ENCODE measurements at regions of chr16 and their contacts with region 1.

Region 1: DNA sequence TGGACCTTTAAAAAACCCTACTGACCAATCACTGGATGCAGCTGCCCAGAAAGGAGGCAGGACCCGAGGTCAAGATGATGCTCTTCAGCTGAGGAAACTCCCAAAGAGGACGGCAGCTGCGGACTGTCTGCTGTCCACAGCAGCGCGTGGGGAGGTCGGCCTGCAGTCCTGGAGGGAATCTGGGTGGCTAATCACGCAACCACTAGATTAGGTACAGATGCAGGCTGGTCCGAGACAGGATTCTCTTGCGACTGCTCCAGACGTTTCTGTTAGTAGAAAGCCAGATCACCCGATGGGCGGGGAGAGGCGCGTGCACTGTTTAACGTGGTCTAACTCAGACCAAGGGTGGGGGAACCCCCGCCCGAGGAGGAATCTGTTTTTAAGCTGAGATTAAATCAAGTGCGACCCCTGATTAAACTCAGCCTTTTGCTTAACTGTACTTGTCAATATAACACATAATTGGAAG is 8.8 kb downstream of the CTRB2 start:
- DNase-seq: no peak
- ATAC-seq: no peak
- H3K4me3 ChIP-seq: no peak overlapping the region
- H3K27ac ChIP-seq: no peak overlapping the region
- H3K4me1 ChIP-seq: peaks cover 3% of the 10 kb centered on the region; the same call in 1 of the 2 replicates
- H3K27me3 ChIP-seq: peaks cover 1 to 4% of the 10 kb centered on the region in 2 experiments
- CTCF ChIP-seq: no peak
- EP300 ChIP-seq: no peak
- POLR2A ChIP-seq: no peak
- RAD21 ChIP-seq: no peak

Region 2: GRCh38 chr16:74813109-74813641 is 385.0 kb before region 1 on chr16:
- CTCF ChIA-PET with region 1: no interaction called
- POLR2A ChIA-PET with region 1: no interaction called
- RAD21 ChIA-PET with region 1: no interaction called
- SMC1A ChIA-PET with region 1: no interaction called
- in situ Hi-C with region 1: no loop called
- intact Hi-C with region 1: loop called (anchors 5 kb)
- DNase-seq: peak; percentile 11
- ATAC-seq: peak; percentile 100
- H3K4me3 ChIP-seq: no peak overlapping the region; the same call in 1 of the 2 replicates
- H3K27ac ChIP-seq: no peak overlapping the region
- H3K4me1 ChIP-seq: no peaks in the 10 kb centered on the region
- H3K27me3 ChIP-seq: no peaks in the 10 kb centered on the region; a peak in 1 of 4 replicates
- CTCF ChIP-seq: peak; percentile 96 to 99 (median 98); a peak in 5 of 6 replicates
- EP300 ChIP-seq: no peak
- POLR2A ChIP-seq: no peak
- RAD21 ChIP-seq: peak; percentile 80

Region 3: GRCh38 chr16:75011634-75012307 is 186.4 kb before region 1 on chr16:
- CTCF ChIA-PET with region 1: no interaction called
- POLR2A ChIA-PET with region 1: no interaction called
- RAD21 ChIA-PET with region 1: no interaction called
- SMC1A ChIA-PET with region 1: no interaction called
- in situ Hi-C with region 1: no loop called
- intact Hi-C with region 1: no loop called
- DNase-seq: peak; percentile 92
- ATAC-seq: peak; percentile 91
- H3K4me3 ChIP-seq: peak overlapping the region; percentile 60
- H3K27ac ChIP-seq: peak overlapping the region; percentile 96
- H3K4me1 ChIP-seq: peaks cover 47% of the 10 kb centered on the region
- H3K27me3 ChIP-seq: no peaks in the 10 kb centered on the region
- CTCF ChIP-seq: no peak
- EP300 ChIP-seq: peak; percentile 89
- POLR2A ChIP-seq: peak; percentile 64
- RAD21 ChIP-seq: no peak

Region 4: DNA sequence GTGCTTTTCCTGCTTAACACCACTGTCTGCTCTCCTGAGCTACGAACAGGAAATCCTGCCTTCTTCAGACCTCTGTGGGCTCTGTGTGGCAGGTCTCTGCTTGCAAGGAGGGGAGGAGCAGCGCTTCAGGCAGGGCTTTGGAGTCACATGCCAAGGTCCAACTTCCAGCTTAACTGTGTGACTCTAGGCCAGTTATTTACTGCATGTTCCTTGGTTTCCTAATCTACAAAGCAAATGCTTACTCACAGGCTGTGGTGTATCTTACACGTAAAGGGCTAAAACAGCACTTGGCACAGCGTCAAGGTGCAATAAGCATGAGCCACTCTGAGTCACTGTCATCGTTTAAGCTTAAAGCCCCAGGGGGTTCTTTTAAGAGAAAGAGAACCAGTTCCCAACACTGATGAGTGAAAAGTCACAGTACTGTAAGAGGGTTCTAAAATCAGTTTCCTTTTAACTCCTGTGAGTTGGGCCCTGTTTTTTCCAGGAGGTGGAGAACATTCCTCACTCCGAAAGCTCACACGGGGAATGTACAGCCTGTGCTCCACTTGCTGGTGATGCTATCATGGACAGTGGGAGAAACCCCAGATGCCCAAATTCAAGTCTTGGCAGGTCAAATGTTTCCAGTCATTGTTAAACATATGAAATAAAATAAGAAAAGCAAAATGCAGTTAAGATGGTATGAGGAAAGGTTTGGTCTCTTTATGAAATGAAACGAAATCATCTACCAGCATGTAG is 107.4 kb after region 1 on chr16:
- CTCF ChIA-PET with region 1: interaction called, 7 read pairs
- POLR2A ChIA-PET with region 1: no interaction called
- RAD21 ChIA-PET with region 1: interaction called, 11 read pairs
- SMC1A ChIA-PET with region 1: no interaction called
- in situ Hi-C with region 1: no loop called
- intact Hi-C with region 1: no loop called
- DNase-seq: peak; percentile 71
- ATAC-seq: peak; percentile 95
- H3K4me3 ChIP-seq: no peak overlapping the region
- H3K27ac ChIP-seq: peak overlapping the region; percentile 55
- H3K4me1 ChIP-seq: peaks cover 12% of the 10 kb centered on the region
- H3K27me3 ChIP-seq: no peaks in the 10 kb centered on the region
- CTCF ChIP-seq: no peak
- EP300 ChIP-seq: peak in 1 of 2 experiments; percentile 13; a peak in 1 of 4 replicates
- POLR2A ChIP-seq: no peak
- RAD21 ChIP-seq: no peak

Region 5: GRCh38 chr16:75379911-75380847 is 182.0 kb after region 1 on chr16:
- CTCF ChIA-PET with region 1: interaction called, 170 read pairs
- POLR2A ChIA-PET with region 1: interaction called, 6 read pairs
- RAD21 ChIA-PET with region 1: interaction called, 65 read pairs
- SMC1A ChIA-PET with region 1: interaction called, 52 read pairs
- in situ Hi-C with region 1: loop called (anchors 5 kb)
- intact Hi-C with region 1: loop called (anchors 1 kb)
- DNase-seq: peak; percentile 60
- ATAC-seq: peak; percentile 97
- H3K4me3 ChIP-seq: no peak overlapping the region
- H3K27ac ChIP-seq: peak overlapping the region; percentile 69
- H3K4me1 ChIP-seq: peaks cover 38% of the 10 kb centered on the region
- H3K27me3 ChIP-seq: no peaks in the 10 kb centered on the region
- CTCF ChIP-seq: no peak
- EP300 ChIP-seq: peak; percentile 76 to 83
- POLR2A ChIP-seq: no peak
- RAD21 ChIP-seq: peak; percentile 4; the same call in 1 of the 2 replicates

Region 6: GRCh38 chr16:75402821-75403475 is 204.8 kb after region 1 on chr16:
- CTCF ChIA-PET with region 1: interaction called, 85 read pairs
- POLR2A ChIA-PET with region 1: interaction called, 6 read pairs
- RAD21 ChIA-PET with region 1: interaction called, 44 read pairs
- SMC1A ChIA-PET with region 1: interaction called, 28 read pairs
- in situ Hi-C with region 1: no loop called
- intact Hi-C with region 1: loop called (anchors 1 kb)
- DNase-seq: no peak
- ATAC-seq: peak; percentile 59; the same call in 2 of the 3 replicates
- H3K4me3 ChIP-seq: no peak overlapping the region
- H3K27ac ChIP-seq: no peak overlapping the region
- H3K4me1 ChIP-seq: no peaks in the 10 kb centered on the region
- H3K27me3 ChIP-seq: no peaks in the 10 kb centered on the region
- CTCF ChIP-seq: peak; percentile 45 to 60 (median 55); a peak in 5 of 6 replicates
- EP300 ChIP-seq: no peak
- POLR2A ChIP-seq: no peak
- RAD21 ChIP-seq: peak; percentile 59

Region 7: DNA sequence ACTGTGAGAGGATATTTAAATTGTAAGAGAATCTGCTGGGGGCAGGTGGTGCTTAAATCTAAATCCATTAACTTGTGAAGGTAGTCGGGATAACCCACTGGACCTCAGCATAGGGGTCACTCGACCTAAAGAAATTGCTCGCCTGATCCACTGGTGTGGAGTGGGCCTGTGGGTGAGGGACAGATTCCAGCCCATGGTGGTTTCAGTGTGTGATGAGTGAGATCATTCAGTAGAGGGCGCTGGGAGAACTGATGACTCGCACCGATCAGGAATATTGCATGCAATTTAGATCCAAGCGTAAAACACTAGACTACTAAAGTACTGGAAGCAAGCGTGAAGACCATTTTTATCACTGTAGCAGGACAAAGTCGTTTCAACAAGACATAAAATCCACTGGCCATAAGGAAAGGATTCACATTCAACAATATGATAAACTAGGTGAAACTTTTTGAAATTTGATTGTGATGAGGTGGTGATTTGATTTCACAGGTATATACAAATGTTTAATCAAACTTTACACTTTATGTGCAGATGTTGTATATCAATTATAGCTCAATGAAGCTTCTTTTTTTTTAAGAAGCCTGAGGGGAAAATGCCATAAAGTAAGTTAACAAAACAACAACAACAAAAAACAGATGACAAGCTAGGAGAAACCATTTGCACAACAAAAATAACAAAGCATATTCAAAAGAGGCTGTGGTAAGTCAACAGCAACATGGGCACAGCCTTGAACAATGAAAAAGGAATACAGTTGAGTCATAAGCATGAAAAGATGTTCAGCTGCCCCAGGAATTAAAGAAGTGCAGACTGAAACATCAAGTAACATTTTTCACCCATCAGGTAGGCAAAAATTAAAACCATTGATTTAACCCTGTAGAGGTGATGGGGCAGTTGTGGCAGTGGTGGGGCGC is 273.8 kb after region 1 on chr16:
- CTCF ChIA-PET with region 1: interaction called, 11 read pairs
- POLR2A ChIA-PET with region 1: no interaction called
- RAD21 ChIA-PET with region 1: interaction called, 6 read pairs
- SMC1A ChIA-PET with region 1: interaction called, 4 read pairs
- in situ Hi-C with region 1: no loop called
- intact Hi-C with region 1: no loop called
- DNase-seq: no peak
- ATAC-seq: peak; percentile 94
- H3K4me3 ChIP-seq: no peak overlapping the region
- H3K27ac ChIP-seq: no peak overlapping the region
- H3K4me1 ChIP-seq: no peaks in the 10 kb centered on the region
- H3K27me3 ChIP-seq: no peaks in the 10 kb centered on the region
- CTCF ChIP-seq: peak; percentile 74 to 85 (median 80)
- EP300 ChIP-seq: no peak
- POLR2A ChIP-seq: no peak
- RAD21 ChIP-seq: peak; percentile 86

Region 8: GRCh38 chr16:75495076-75495674 is 297.0 kb after region 1 on chr16 and contains the start of gene CHST6:
- CTCF ChIA-PET with region 1: no interaction called
- POLR2A ChIA-PET with region 1: no interaction called
- RAD21 ChIA-PET with region 1: no interaction called
- SMC1A ChIA-PET with region 1: no interaction called
- in situ Hi-C with region 1: no loop called
- intact Hi-C with region 1: no loop called
- DNase-seq: no peak
- ATAC-seq: peak; percentile 80
- H3K4me3 ChIP-seq: peak within 1 kb of the TSS; percentile 64
- H3K27ac ChIP-seq: no peak within 1 kb of the TSS
- H3K4me1 ChIP-seq: peaks cover 11% of the 10 kb centered on the region
- H3K27me3 ChIP-seq: peaks cover 0 to 2% of the 10 kb centered on the region in 2 experiments; a peak in 2 of 4 replicates
- CTCF ChIP-seq: no peak
- EP300 ChIP-seq: no peak
- POLR2A ChIP-seq: peak; percentile 61; the same call in 1 of the 2 replicates
- RAD21 ChIP-seq: no peak
- polyA plus RNA-seq, gene CHST6: 0.14 to 0.18 TPM